Dendritic cell treated with granulocyte-macrophage colony-stimulating factor and Interleukin-4, amounts not matched to agents 40 ng/mL and 50 ng/mL, for 4 days (primary cell): ENCODE measurements at regions of chr5 and their contacts with region 1.

Region 1: GRCh38 chr5:180831139-180832048 is 28.8 kb upstream of the MGAT1 start:
- H3K4me3 Mint-ChIP-seq: peak overlapping the region; percentile 92
- H3K27ac Mint-ChIP-seq: peak overlapping the region; percentile 89
- H3K4me1 Mint-ChIP-seq: peaks cover 68% of the 10 kb centered on the region
- H3K27me3 Mint-ChIP-seq: no peaks in the 10 kb centered on the region

Region 2: GRCh38 chr5:180802325-180803180 is 28.8 kb before region 1 on chr5 and contains the start of gene MGAT1:
- intact Hi-C with region 1: loop called (anchors 2 kb)
- H3K4me3 Mint-ChIP-seq: peak within 1 kb of the TSS; percentile 94
- H3K27ac Mint-ChIP-seq: peak within 1 kb of the TSS; percentile 97
- H3K4me1 Mint-ChIP-seq: peaks cover 82% of the 10 kb centered on the region
- H3K27me3 Mint-ChIP-seq: no peaks in the 10 kb centered on the region

Region 3: GRCh38 chr5:180816608-180817534 is 14.5 kb before region 1 on chr5:
- intact Hi-C with region 1: loop called (anchors 2 kb)
- H3K4me3 Mint-ChIP-seq: peak overlapping the region; percentile 11
- H3K27ac Mint-ChIP-seq: peak overlapping the region; percentile 91
- H3K4me1 Mint-ChIP-seq: peaks cover 77% of the 10 kb centered on the region
- H3K27me3 Mint-ChIP-seq: no peaks in the 10 kb centered on the region

Region 4: DNA sequence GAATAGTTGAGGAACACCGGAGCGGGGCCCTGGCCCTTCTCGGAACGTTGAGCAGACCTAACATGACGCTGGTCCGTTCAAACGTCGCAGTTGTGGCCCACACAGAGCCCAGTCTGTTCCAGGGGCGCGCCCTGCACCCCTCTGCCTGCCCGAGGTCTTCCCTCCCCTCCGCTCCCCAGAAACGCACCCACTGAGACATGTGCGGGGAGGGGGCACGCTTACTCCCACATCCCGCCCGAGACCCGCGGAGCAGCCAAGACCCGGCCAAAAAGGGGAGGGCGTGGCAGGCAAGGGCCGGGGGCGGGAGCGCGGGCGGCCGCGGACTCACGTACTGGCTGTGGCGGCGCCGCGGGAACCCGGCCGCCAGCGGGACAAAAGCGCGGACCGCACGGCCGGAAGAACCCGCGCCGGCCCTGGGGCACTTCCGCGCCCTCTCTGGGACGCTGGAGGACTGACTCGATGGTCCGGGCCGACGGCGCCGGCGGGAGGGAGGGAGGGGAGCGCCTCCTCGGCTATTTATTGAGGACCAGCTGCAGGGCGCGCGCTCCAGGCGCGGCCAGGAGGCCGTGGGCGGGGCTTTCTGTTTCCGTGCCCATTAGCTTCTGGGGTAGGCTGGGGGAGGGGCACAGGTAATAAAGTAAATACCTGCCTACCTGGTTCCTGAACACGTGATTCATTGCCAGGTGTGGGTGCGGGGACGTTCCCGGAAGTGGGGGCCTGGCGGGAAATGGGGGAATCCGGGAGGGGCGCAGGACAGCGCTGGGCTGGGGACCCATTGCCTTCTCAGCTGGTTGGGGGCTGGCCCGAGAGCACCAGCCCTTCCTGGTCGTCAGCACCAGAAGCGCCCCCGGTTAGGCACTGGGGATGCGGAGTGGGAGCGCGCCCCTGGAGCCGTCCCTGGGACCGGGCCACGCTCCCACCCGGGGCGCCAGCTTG is 29.8 kb after region 1 on chr5 and contains the start of gene ZFP62:
- intact Hi-C with region 1: loop called (anchors 2 kb)
- H3K4me3 Mint-ChIP-seq: peak within 1 kb of the TSS; percentile 91
- H3K27ac Mint-ChIP-seq: peak within 1 kb of the TSS; percentile 88
- H3K4me1 Mint-ChIP-seq: peaks cover 22% of the 10 kb centered on the region
- H3K27me3 Mint-ChIP-seq: peaks cover 5% of the 10 kb centered on the region

Region 5: DNA sequence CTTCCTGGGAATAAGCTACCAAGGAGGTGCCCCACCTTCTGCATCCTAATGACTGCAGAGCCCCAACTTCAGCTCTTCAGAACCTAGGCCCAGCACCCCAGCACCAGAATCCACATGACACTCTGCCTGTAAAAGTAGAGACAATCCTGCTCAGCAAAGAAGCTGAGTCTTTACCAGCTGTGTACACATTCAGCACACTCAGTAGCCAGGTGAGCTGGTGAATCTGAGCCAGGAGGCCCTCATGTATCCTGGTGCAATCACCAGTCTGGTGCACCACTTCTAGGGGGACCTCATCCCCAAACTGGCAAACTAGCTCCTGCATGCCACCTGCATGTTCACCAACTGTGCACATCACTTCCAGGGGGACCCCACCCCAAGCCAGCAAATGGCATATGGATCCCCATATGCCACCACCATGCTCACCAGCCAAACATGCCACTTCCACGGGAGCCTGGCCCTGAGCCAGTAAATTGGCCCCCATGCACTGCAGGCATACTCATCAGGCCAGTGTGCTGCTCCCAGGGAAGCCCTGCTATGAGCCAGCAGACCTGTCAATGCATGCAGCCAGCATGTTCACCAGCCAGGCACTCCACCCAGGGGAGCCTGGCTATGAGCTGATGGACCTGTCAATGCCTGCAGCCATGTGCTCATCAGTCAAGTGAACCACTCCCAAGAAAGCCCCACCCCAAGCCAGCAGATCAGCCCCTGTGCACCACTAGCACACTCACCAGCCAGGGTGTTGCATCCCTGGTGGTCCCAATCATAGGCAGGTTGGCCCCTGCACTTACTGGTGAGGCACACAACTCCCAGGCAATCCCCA is 193.1 kb after region 1 on chr5:
- intact Hi-C with region 1: no loop called
- H3K4me3 Mint-ChIP-seq: no peak overlapping the region
- H3K27ac Mint-ChIP-seq: no peak overlapping the region
- H3K4me1 Mint-ChIP-seq: no peaks in the 10 kb centered on the region
- H3K27me3 Mint-ChIP-seq: peaks cover 4% of the 10 kb centered on the region